H1 (cell line): ENCODE measurements at regions of chr15 and their contacts with region 1.

Region 1: GRCh38 chr15:89143503-89144162 is 55.4 kb downstream of the ABHD2 start:
- DNase-seq: no peak
- H3K4me3 ChIP-seq: no peak overlapping the region
- H3K27ac ChIP-seq: no peak overlapping the region
- H3K4me1 ChIP-seq: no peaks in the 10 kb centered on the region; a peak in 1 of 7 replicates
- H3K27me3 ChIP-seq: no peaks in the 10 kb centered on the region
- CTCF ChIP-seq: no peak
- EP300 ChIP-seq: no peak
- POLR2A ChIP-seq: no peak
- RAD21 ChIP-seq: no peak

Region 2: GRCh38 chr15:89157918-89158564 is 14.4 kb after region 1 on chr15:
- CTCF ChIA-PET with region 1: interaction called, 12 read pairs
- POLR2A ChIA-PET with region 1: interaction called, 3 read pairs
- DNase-seq: no peak
- H3K4me3 ChIP-seq: no peak overlapping the region
- H3K27ac ChIP-seq: no peak overlapping the region
- H3K4me1 ChIP-seq: no peaks in the 10 kb centered on the region
- H3K27me3 ChIP-seq: no peaks in the 10 kb centered on the region
- CTCF ChIP-seq: no peak
- EP300 ChIP-seq: no peak
- POLR2A ChIP-seq: no peak
- RAD21 ChIP-seq: no peak

Region 3: DNA sequence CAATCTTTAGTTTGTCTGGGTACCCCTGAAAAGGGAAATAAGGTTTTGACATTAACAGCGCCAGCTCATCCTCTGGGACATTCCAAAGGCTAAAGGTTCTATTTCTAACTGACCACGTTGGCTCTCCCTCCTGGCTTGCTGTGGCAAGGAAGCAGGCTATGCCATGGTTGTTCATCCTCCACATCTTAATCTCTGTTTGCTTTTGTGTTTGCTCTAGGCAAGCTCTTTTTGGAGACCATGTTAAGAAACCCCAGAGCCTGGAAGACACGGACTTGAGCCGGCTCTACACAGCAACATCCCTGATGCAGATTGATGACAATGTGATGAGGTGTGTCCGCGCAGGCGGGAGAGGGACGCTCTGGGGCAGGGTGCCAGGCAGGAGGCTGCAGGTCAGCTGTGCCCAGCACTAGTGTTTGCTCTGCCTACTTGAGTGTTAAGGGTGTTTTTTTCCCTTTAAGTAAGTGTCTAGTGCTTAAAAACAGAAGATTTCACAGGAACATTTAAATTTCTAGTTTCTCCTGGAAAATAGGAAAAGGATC is 44.4 kb after region 1 on chr15:
- CTCF ChIA-PET with region 1: no interaction called
- POLR2A ChIA-PET with region 1: no interaction called
- DNase-seq: no peak
- H3K4me3 ChIP-seq: no peak overlapping the region
- H3K27ac ChIP-seq: no peak overlapping the region
- H3K4me1 ChIP-seq: no peaks in the 10 kb centered on the region; a peak in 1 of 7 replicates
- H3K27me3 ChIP-seq: no peaks in the 10 kb centered on the region
- CTCF ChIP-seq: no peak
- EP300 ChIP-seq: no peak
- POLR2A ChIP-seq: no peak
- RAD21 ChIP-seq: no peak

Region 4: GRCh38 chr15:89198196-89198595 is 54.6 kb after region 1 on chr15:
- CTCF ChIA-PET with region 1: no interaction called
- POLR2A ChIA-PET with region 1: no interaction called
- DNase-seq: no peak
- H3K4me3 ChIP-seq: peak overlapping the region in 1 of 4 experiments; percentile 4; a peak in 1 of 8 replicates
- H3K27ac ChIP-seq: no peak overlapping the region
- H3K4me1 ChIP-seq: peaks cover 8 to 34% (median 15%) of the 10 kb centered on the region in 4 experiments
- H3K27me3 ChIP-seq: no peaks in the 10 kb centered on the region
- CTCF ChIP-seq: no peak
- EP300 ChIP-seq: no peak
- POLR2A ChIP-seq: no peak
- RAD21 ChIP-seq: no peak

Region 5: GRCh38 chr15:89419382-89419984 is 275.9 kb after region 1 on chr15:
- CTCF ChIA-PET with region 1: no interaction called
- POLR2A ChIA-PET with region 1: no interaction called
- DNase-seq: peak in 1 of 2 experiments; percentile 95
- H3K4me3 ChIP-seq: no peak overlapping the region
- H3K27ac ChIP-seq: no peak overlapping the region
- H3K4me1 ChIP-seq: peaks cover 0 to 5% (median 3%) of the 10 kb centered on the region in 4 experiments; a peak in 4 of 7 replicates
- H3K27me3 ChIP-seq: peaks cover 20 to 70% (median 52%) of the 10 kb centered on the region in 4 experiments
- CTCF ChIP-seq: no peak
- EP300 ChIP-seq: no peak
- POLR2A ChIP-seq: no peak
- RAD21 ChIP-seq: peak in 1 of 2 experiments; percentile 24; a peak in 1 of 4 replicates